Aorta (tissue), 5 donors: ENCODE measurements at regions of chr19 and their contacts with region 1.

Region 1: DNA sequence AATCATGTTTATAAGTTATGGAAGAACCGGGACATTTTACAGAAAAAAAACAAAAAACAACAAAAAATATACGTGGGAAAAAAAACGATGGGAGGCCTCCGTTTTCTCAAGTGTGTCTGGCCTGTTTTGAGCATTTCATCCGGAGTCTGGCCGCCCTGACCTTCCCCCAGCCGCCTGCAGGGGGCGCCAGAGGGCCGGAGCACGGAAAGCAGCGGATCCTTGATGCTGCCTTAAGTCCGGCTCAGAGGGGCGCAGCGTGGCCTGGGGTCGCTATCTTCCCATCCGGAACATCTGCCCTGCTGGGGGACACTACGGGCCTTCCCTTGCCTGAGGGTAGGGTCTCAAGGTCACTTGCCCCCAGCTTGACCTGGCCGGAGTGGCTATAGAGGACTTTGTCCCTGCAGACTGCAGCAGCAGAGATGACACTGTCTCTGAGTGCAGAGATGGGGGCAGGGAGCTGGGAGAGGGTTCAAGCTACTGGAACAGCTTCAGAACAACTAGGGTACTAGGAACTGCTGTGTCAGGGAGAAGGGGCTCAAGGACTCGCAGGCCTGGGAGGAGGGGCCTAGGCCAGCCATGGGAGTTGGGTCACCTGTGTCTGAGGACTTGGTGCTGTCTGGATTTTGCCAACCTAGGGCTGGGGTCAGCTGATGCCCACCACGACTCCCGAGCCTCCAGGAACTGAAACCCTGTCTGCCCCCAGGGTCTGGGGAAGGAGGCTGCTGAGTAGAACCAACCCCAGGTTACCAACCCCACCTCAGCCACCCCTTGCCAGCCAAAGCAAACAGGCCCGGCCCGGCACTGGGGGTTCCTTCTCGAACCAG is 1.8 kb upstream of the APOE start:
- DNase-seq: peak; percentile 75 to 93
- ATAC-seq: peak; percentile 86
- H3K4me3 ChIP-seq: no peak overlapping the region
- H3K27ac ChIP-seq: no peak overlapping the region
- H3K4me1 ChIP-seq: no peaks in the 10 kb centered on the region
- H3K27me3 ChIP-seq: no peaks in the 10 kb centered on the region

Region 2: DNA sequence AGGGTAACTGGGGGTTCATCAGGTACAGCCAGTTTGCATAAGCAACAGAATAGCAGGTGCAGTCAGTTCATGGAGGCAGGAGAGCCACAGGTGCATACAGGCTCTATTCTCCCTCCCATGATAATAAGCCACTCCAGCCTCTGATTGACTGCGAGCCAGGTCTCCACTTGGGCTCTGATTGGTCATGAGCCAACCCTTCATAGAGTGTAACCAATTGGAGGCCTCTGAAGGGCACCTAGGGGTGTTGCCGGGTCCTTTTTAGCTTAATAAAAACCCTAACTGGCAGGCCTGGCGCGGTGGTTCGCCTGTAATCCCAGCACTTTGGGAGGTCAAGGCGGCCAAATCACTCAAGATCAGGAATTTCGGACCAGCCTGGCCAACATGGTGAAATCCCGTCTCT is 427.6 kb after region 1 on chr19:
- intact Hi-C with region 1: loop called in 1 of 2 experiments (anchors 10 kb)
- DNase-seq: no peak
- ATAC-seq: no peak
- H3K4me3 ChIP-seq: no peak overlapping the region
- H3K27ac ChIP-seq: no peak overlapping the region
- H3K4me1 ChIP-seq: no peaks in the 10 kb centered on the region
- H3K27me3 ChIP-seq: no peaks in the 10 kb centered on the region